ENCODE measurements at regions of chr11 and their contacts with region 1.

Region 1: DNA sequence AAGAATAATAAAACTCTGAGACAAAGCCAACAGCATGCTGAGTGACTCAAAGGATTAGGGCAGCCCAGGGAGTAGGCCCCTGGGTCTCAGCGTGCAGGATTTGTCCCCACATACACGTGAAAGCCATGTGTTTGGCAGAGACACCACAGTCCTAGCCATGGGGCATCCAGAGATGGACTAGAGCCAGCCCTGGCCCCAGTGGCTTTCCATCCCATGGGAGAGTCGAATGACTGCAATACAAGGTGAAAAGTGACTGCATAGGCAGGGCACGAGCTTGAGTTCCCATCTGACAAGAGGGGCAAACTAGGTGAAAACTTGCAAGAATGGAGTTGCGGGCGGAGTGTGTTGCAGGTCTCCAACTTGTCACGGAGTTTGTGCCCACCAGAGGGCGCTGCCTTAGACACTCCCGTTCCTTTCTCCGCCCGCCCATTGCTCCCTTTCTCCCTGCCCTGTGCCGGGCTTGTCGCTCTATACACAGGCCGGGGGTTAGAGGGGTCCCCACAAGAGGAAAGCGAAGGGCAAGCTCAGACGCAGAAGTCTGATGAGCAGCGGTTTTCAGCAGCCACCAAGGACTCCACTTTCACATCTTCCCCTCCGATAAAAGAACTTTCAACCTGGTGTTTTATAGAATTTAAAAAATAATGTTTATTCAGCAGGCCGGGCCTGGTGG is 24.2 kb downstream of the TSKU start:
- DNase-seq: peak; percentile 61 to 75
- ATAC-seq: peak; percentile 70 to 83
- H3K4me3 ChIP-seq: peak overlapping the region in 3 of 4 donors; percentile 18 to 27 (median 23)
- H3K27ac ChIP-seq: no peak overlapping the region
- H3K4me1 ChIP-seq: peaks cover 10 to 13% of the 10 kb centered on the region in 2 donors
- H3K27me3 ChIP-seq: no peaks in the 10 kb centered on the region
- CTCF ChIP-seq: peak; percentile 70 to 85 (median 79)
- POLR2A ChIP-seq: no peak

Region 2: GRCh38 chr11:76860539-76861475 is 53.5 kb after region 1 on chr11 and contains the start of gene ACER3:
- in situ Hi-C with region 1: no loop called
- intact Hi-C with region 1: loop called (anchors 1 kb)
- DNase-seq: peak; percentile 72 to 87
- ATAC-seq: peak; percentile 94
- H3K4me3 ChIP-seq: peak within 1 kb of the TSS; percentile 72 to 98 (median 88)
- H3K27ac ChIP-seq: peak within 1 kb of the TSS; percentile 83 to 95 (median 87)
- H3K4me1 ChIP-seq: peaks cover 10 to 16% of the 10 kb centered on the region in 2 donors
- H3K27me3 ChIP-seq: no peaks in the 10 kb centered on the region
- CTCF ChIP-seq: peak in 1 of 5 experiments; percentile 15
- POLR2A ChIP-seq: peak; percentile 80 to 88
- total RNA-seq, gene ACER3: 1.1 to 3.4 (median 2.6) TPM

Region 3: DNA sequence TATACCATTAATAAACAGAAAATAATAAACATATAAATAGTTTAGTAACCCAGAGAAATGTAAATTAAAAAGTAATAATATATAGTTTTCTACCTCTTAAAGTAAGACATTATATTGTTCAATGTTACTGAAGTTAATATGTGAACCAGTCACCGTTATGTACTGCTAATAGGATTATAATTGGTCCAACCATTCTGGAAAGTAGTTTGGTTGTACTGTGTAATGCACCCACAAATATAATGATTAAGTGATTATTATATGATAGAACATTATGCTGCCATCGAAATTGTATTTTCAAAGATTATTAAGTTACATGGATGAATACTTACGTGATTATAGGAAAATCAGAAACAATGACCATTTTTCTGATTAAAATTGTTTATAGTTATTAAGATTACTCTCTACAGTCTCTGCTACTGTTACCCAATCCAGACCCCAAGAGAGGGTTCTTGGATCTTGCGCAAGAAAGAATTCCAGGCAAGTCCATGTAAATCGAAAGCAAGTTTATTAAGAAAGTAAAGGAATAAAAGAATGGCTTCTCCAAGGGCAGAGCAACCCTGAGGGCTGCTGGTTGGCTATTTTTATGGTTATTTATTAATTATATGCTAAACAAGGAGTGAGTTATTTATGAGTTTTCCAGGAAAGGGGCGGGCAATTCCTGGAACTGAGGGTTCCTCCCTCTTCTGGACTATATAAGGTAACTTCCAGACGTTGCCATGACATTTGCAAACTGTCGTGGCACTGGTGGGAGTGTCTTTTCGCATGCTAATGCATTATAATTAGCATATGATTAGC is 103.5 kb after region 1 on chr11:
- in situ Hi-C with region 1: loop called (anchors 5 kb)
- intact Hi-C with region 1: no loop called
- DNase-seq: peak in 1 of 2 donors; percentile 30
- ATAC-seq: peak in 1 of 2 donors; percentile 50
- H3K4me3 ChIP-seq: no peak overlapping the region
- H3K27ac ChIP-seq: peak overlapping the region in 1 of 4 donors; percentile 11
- H3K4me1 ChIP-seq: no peaks in the 10 kb centered on the region
- H3K27me3 ChIP-seq: no peaks in the 10 kb centered on the region
- CTCF ChIP-seq: no peak
- POLR2A ChIP-seq: no peak

Measured in gastrocnemius medialis (tissue), 4 donors.